KBM-7 (cell line): ENCODE measurements at regions of chr3 and their contacts with region 1.

Region 1: DNA sequence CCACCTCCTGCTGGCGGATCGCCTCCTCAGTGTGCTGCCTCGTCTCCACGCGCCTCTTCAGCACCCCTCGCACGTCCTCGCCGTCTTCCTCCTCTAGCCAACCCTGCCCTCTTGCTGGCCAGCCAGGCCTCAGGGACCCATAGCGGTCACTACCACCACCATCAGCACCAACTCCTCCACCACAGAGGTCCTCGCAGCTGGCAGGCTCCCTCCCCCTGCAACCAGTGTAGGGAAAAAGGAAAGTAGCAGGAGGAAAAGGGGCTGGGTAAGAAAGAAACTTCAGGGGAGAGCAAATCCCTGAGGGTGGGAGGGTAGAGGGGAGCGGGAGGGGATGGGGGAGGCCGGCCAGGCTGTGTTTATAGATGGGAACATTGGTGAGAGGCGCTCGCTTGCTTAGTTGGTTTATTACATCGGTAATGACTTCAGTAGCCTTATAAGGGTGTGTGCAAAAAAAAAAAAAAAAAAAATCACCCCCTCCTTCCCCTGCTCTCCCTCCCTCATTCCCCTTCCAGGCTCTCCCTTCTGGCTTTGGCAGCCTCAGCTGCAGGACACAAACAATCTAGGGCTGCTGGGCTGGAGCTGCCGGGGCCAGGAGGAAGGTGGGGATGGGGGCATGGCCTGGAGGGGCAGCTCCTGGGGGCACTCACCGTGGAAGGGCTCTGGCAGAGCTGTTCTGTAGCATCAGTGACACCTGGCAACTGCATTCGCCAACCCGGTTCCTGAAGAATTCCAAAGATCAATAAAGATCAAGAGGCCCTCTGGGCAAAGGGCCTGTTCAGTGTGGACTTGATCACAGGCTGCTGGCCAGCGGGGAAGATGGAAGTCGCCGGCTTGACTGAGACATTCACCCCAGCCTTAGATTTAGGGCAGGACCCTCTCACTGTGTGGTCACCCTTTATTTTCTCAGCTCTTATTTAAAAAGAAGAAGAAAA is 116.2 kb upstream of the HACD2 start:
- DNase-seq: no peak

Region 2: GRCh38 chr3:123652346-123652984 is 48.6 kb before region 1 on chr3:
- in situ Hi-C with region 1: loop called (anchors 10 kb)
- DNase-seq: peak; percentile 70

Region 3: DNA sequence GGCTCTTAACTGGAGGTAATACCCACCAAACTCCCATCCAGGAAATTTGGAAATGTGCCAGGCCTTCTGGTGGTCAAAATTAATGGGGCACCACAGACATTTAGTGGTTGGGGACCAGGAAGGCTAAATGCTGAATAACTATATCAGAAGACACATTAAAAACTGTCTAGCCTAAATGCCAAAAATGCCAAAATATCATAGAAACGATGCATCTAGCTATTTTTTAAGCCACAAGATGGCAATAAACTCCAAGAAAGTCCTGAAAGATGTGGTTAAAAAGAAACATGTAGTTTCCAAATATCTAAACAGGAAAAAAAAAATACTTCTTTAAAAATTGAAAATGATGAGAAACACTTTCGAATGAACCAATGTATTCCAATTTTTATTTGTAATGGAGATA is 240.1 kb after region 1 on chr3:
- in situ Hi-C with region 1: no loop called
- DNase-seq: no peak